ENCODE measurements at regions of chr15 and their contacts with region 1.

Region 1: GRCh38 chr15:64596701-64597476 is 136.5 kb downstream of the ZNF609 start:
- DNase-seq: peak; percentile 33
- ATAC-seq: peak; percentile 72
- H3K4me3 Mint-ChIP-seq: peak overlapping the region; percentile 73
- H3K27ac Mint-ChIP-seq: peak overlapping the region; percentile 93
- H3K4me1 Mint-ChIP-seq: peaks cover 62% of the 10 kb centered on the region
- H3K27me3 Mint-ChIP-seq: no peaks in the 10 kb centered on the region
- CTCF ChIP-seq: no peak

Region 2: DNA sequence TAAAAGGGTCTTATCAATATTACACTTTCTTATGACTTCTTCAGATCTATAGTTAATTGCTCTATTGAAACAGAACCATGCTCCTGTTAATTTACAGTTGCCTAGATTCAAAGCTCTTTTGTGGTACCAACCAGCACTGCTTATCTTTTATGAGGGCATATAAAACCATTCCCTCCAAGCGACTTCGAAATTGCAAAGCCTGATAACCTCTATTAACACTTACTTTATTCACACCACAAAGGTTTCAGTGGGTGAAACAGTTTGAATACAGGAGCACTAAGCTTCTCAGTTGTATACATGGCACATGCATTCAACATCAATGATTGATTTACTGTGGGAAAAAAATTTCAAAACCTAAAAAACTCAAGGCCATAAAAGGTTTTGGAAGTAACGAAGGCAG is 359.2 kb before region 1 on chr15:
- CTCF ChIA-PET with region 1: no interaction called
- POLR2A ChIA-PET with region 1: no interaction called
- intact Hi-C with region 1: no loop called
- DNase-seq: no peak
- ATAC-seq: no peak
- H3K4me3 Mint-ChIP-seq: no peak overlapping the region
- H3K27ac Mint-ChIP-seq: no peak overlapping the region
- H3K4me1 Mint-ChIP-seq: peaks cover 63% of the 10 kb centered on the region
- H3K27me3 Mint-ChIP-seq: no peaks in the 10 kb centered on the region
- CTCF ChIP-seq: no peak

Region 3: GRCh38 chr15:64548235-64548634 is 48.7 kb before region 1 on chr15:
- CTCF ChIA-PET with region 1: no interaction called
- POLR2A ChIA-PET with region 1: no interaction called
- intact Hi-C with region 1: no loop called
- DNase-seq: no peak
- ATAC-seq: no peak
- H3K4me3 Mint-ChIP-seq: no peak overlapping the region
- H3K27ac Mint-ChIP-seq: no peak overlapping the region
- H3K4me1 Mint-ChIP-seq: peaks cover 44% of the 10 kb centered on the region
- H3K27me3 Mint-ChIP-seq: no peaks in the 10 kb centered on the region
- CTCF ChIP-seq: no peak

Region 4: DNA sequence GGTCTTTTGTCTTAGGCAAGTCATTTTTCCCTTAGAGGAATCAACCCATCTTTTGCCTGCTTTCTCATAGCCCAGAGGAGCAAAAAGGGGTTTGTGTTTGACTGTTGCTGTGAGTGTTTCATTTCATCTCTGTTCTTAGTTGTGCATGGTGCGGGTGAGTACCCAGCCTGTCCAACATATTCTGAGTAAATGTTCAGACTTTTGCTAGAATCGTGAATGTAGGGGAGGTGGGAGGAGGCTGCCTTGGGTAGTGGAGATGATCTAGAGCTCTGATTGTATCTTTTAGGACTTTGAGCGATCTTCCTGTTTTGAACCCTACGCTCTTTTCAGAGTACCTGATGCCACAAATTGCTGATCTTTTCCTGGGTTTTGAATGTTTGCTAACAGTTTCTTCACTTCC is 13.4 kb before region 1 on chr15:
- CTCF ChIA-PET with region 1: interaction called, 3 read pairs
- POLR2A ChIA-PET with region 1: interaction called, 11 read pairs
- intact Hi-C with region 1: no loop called
- DNase-seq: no peak
- ATAC-seq: peak; percentile 64
- H3K4me3 Mint-ChIP-seq: peak overlapping the region; percentile 51
- H3K27ac Mint-ChIP-seq: peak overlapping the region; percentile 83
- H3K4me1 Mint-ChIP-seq: peaks cover 41% of the 10 kb centered on the region
- H3K27me3 Mint-ChIP-seq: no peaks in the 10 kb centered on the region
- CTCF ChIP-seq: no peak